ENCODE measurements at regions of chr11 and their contacts with region 1.

Region 1: GRCh38 chr11:74570266-74571061 is 21.9 kb upstream of the POLD3 start:
- DNase-seq: peak; percentile 71
- H3K4me3 Mint-ChIP-seq: no peak overlapping the region
- H3K27ac Mint-ChIP-seq: no peak overlapping the region
- H3K4me1 Mint-ChIP-seq: no peaks in the 10 kb centered on the region
- H3K27me3 Mint-ChIP-seq: no peaks in the 10 kb centered on the region
- CTCF ChIP-seq: peak; percentile 83

Region 2: DNA sequence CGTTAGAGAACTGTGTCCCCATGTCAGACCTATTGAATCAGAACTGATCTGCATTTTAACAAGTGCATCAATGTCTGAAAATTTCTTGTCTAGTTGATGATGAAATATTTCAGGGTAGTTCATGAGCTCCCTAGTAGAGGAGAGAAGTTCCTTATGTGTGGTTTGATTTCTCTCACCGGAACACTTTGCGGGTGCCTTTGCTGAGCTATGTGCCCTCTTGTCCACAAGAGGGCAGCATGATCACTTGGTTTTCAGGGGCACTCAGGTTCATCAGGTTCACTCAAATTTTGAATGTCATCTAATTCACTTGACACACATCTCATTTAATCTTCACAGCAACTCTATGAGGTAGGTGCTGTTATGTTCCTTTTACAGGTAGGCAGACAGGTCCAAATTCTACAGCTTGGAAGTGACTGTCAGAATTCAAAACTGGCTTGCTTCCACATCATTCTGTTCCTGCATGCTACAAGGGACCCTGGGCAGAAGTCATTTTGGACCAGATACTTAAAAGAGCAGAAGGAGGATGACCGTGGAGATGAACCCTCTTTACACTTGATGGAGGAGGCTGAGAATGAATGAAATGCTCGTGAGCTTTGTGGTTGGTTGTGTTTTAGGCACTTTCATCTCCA is 314.6 kb before region 1 on chr11:
- CTCF ChIA-PET with region 1: interaction called, 38 read pairs
- POLR2A ChIA-PET with region 1: interaction called, 3 read pairs
- intact Hi-C with region 1: loop called (anchors 1 kb)
- DNase-seq: peak; percentile 79
- H3K4me3 Mint-ChIP-seq: no peak overlapping the region
- H3K27ac Mint-ChIP-seq: no peak overlapping the region
- H3K4me1 Mint-ChIP-seq: peaks cover 15% of the 10 kb centered on the region
- H3K27me3 Mint-ChIP-seq: no peaks in the 10 kb centered on the region
- CTCF ChIP-seq: peak; percentile 76

Region 3: DNA sequence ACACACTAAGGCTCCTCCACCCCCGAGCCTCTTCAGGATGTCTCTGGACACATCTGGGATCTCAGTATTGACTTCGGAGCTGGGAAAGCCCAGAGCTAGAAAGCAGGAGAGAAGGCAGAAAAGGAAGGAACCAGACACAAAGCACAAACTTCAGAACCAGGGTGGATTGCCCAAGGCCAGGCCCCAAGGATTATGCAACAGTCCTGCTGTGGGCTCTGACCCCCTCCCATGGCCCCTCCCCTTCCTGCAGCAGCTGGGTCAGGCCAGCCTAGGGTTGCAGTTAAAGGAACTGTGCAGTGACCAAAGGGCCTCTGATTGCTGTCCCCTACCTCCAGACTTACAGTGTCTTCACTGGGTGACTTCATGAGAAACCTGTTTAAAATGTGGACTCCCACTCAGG is 108.5 kb before region 1 on chr11:
- CTCF ChIA-PET with region 1: interaction called, 24 read pairs
- POLR2A ChIA-PET with region 1: no interaction called
- intact Hi-C with region 1: no loop called
- DNase-seq: peak; percentile 44
- H3K4me3 Mint-ChIP-seq: no peak overlapping the region
- H3K27ac Mint-ChIP-seq: no peak overlapping the region
- H3K4me1 Mint-ChIP-seq: no peaks in the 10 kb centered on the region
- H3K27me3 Mint-ChIP-seq: no peaks in the 10 kb centered on the region
- CTCF ChIP-seq: no peak

Region 4: GRCh38 chr11:74550991-74551753 is 19.3 kb before region 1 on chr11:
- CTCF ChIA-PET with region 1: interaction called, 13 read pairs
- POLR2A ChIA-PET with region 1: no interaction called
- intact Hi-C with region 1: no loop called
- DNase-seq: no peak
- H3K4me3 Mint-ChIP-seq: no peak overlapping the region
- H3K27ac Mint-ChIP-seq: no peak overlapping the region
- H3K4me1 Mint-ChIP-seq: peaks cover 6% of the 10 kb centered on the region
- H3K27me3 Mint-ChIP-seq: no peaks in the 10 kb centered on the region
- CTCF ChIP-seq: no peak